Prostate gland (tissue), 2 donors: ENCODE measurements at regions of chr19 and their contacts with region 1.

Region 1: GRCh38 chr19:28324275-28325060 is 888.5 kb downstream of the UQCRFS1 start:
- DNase-seq: no peak
- H3K4me3 ChIP-seq: no peak overlapping the region
- H3K27ac ChIP-seq: no peak overlapping the region
- H3K4me1 ChIP-seq: no peaks in the 10 kb centered on the region
- H3K27me3 ChIP-seq: peaks cover 2% of the 10 kb centered on the region
- CTCF ChIP-seq: no peak
- POLR2A ChIP-seq: no peak

Region 2: DNA sequence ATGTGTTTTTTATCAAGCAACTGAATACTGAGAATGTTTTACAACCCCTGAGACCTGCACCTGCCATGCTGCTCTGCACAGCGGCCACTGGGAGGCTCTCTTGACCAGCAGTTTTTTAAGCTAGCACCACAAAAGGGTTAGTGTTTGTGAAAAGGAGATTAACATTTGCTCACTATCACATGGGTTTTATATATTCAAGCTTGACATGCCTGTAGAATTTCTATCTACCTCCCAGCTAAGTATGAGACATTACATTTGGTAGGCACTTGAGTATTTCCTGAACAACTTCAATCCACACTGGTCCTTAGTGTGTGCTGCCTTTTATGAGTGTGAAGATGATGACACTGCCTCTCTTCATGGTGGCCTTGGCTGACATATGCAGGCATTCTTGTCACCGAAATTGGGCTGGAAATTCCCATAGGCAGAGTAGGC is 350.4 kb before region 1 on chr19:
- intact Hi-C with region 1: loop called (anchors 5 kb)
- DNase-seq: no peak
- H3K4me3 ChIP-seq: no peak overlapping the region
- H3K27ac ChIP-seq: no peak overlapping the region
- H3K4me1 ChIP-seq: no peaks in the 10 kb centered on the region
- H3K27me3 ChIP-seq: no peaks in the 10 kb centered on the region
- CTCF ChIP-seq: peak; percentile 16 to 61 (median 54)
- POLR2A ChIP-seq: no peak

Region 3: DNA sequence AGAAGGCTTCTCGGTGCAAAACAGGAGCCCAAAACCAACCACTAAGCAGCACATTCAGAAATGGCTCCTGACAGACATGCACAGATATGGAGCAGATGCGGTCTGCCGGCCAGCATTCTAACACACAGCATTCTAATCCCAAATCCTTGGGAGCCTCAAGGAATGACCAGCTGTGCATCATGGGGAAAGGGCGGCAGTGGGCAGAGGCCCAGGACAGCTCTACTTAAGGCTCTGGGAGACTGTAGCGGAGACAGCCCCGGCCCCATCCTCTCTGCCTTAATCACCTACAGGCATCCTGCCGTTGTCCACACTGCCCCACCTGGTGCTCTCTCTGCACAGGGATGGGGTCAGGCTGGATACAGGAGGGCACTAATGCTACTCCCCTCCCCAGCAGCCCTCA is 127.5 kb before region 1 on chr19:
- intact Hi-C with region 1: no loop called
- DNase-seq: no peak
- H3K4me3 ChIP-seq: no peak overlapping the region
- H3K27ac ChIP-seq: no peak overlapping the region
- H3K4me1 ChIP-seq: no peaks in the 10 kb centered on the region
- H3K27me3 ChIP-seq: no peaks in the 10 kb centered on the region
- CTCF ChIP-seq: no peak
- POLR2A ChIP-seq: no peak

Region 4: DNA sequence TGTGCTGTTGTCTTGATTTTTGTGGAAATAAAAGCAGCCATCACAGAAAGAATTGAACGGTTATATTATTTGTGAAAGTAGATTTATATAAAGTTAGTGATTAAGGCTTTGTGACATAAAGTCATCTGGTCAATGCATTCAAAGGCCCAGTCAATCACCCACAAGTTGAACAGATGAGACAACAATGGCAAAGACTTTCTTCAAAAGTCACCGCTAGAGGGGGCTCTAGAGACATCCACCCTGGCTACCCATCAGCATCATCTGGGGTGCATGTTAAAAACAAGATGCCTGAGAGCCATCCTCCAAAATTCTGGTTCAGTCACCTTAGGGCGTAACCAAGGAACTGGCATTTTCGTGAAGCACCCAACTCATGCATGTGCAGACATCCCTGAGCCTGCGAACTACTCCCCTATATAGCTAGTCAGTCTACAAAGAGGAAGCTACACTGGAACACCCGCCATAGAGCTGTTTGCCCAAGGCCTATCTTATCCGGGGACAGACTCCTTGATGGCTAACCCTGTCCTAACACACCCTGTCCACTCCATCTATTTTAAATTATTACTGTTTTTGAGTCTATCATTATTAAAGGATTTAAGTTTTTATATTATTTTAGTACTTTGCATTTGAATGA is 82.1 kb before region 1 on chr19:
- intact Hi-C with region 1: no loop called
- DNase-seq: peak; percentile 19
- H3K4me3 ChIP-seq: no peak overlapping the region
- H3K27ac ChIP-seq: no peak overlapping the region
- H3K4me1 ChIP-seq: no peaks in the 10 kb centered on the region
- H3K27me3 ChIP-seq: no peaks in the 10 kb centered on the region
- CTCF ChIP-seq: peak in 3 of 4 experiments; percentile 21 to 42 (median 40)
- POLR2A ChIP-seq: no peak

Region 5: DNA sequence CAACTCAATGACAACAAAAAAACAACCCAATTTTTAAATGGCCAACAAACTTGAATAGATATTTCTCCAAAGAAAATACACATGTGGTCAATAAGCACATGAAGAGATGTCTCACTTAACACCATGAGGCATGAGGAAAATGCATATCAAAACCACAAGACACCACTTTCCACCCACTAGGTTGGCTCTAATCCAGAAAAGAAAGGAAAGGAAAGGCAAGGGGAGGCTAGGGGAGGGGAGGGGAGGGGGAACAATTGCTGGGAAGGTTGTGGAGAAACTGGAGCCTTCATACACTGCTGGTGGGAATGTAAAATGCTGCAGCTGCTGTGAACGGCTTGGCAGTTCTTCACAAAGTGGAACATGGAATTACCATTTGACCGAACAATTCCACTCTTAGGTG is 34.2 kb after region 1 on chr19:
- intact Hi-C with region 1: no loop called
- DNase-seq: no peak
- H3K4me3 ChIP-seq: no peak overlapping the region
- H3K27ac ChIP-seq: no peak overlapping the region
- H3K4me1 ChIP-seq: no peaks in the 10 kb centered on the region
- H3K27me3 ChIP-seq: no peaks in the 10 kb centered on the region
- CTCF ChIP-seq: no peak
- POLR2A ChIP-seq: no peak